Right cardiac atrium (tissue), 5 donors: ENCODE measurements at regions of chr2 and their contacts with region 1.

Region 1: GRCh38 chr2:98835831-98836385 is 100.1 kb downstream of the CRACDL start:
- DNase-seq: no peak
- ATAC-seq: no peak
- H3K4me3 ChIP-seq: no peak overlapping the region
- H3K27ac ChIP-seq: no peak overlapping the region
- H3K4me1 ChIP-seq: peaks cover 2% of the 10 kb centered on the region
- H3K27me3 ChIP-seq: no peaks in the 10 kb centered on the region

Region 2: GRCh38 chr2:98649135-98649991 is 186.5 kb before region 1 on chr2:
- intact Hi-C with region 1: loop called (anchors 1 to 5 kb)
- DNase-seq: peak; percentile 62 to 83 (median 68)
- ATAC-seq: peak; percentile 93 to 94
- H3K4me3 ChIP-seq: no peak overlapping the region
- H3K27ac ChIP-seq: no peak overlapping the region
- H3K4me1 ChIP-seq: no peaks in the 10 kb centered on the region
- H3K27me3 ChIP-seq: no peaks in the 10 kb centered on the region

Region 3: DNA sequence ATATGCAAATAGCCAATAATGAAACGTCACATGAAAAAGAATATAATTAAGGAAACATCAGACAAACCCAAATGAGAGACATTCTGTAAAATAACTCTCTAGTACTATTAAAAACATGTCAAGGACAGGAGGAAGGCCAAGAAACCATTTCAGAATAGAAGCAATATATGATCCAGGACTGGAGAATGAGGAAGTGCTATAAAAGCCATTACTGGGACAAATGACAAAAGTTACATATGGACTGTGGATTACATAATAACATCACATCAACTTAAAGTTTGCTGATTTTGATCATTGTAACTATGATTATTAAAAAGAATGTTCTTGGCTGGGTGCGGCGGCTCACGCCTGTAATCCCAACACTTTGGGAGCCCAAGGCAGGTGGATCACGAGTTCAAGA is 18.8 kb after region 1 on chr2:
- intact Hi-C with region 1: no loop called
- DNase-seq: no peak
- ATAC-seq: no peak
- H3K4me3 ChIP-seq: no peak overlapping the region
- H3K27ac ChIP-seq: no peak overlapping the region
- H3K4me1 ChIP-seq: no peaks in the 10 kb centered on the region
- H3K27me3 ChIP-seq: no peaks in the 10 kb centered on the region